ENCODE measurements at regions of chr12 and their contacts with region 1.

Region 1: DNA sequence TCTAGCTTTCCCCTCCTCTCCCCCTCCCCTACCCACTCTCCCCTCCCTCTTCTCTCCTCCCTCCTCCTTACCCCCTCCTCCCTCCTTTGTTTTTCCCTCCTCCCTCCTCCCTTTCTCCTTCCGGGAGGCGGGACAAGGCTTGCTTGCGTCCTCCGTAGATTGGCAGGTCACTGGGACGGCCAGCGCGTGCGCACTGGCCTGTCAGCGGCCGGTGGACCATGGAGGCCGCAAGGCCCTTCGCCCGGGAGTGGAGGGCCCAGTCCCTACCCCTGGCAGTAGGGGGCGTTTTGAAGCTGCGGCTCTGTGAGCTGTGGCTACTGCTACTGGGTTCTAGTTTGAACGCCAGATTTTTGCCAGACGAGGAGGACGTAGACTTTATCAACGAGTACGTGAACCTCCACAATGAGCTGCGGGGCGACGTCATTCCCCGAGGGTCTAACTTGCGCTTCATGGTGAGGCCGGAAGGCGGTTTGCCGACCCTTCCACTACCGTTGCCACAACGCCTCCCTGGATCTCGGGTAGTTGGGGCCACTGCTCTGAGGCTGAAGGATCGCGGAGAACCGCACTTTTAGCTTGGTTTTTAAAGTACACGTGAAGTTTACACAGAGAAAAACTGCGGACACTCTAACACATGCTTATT is at the start of gene GLIPR1L2:
- DNase-seq: peak; percentile 81 to 99
- ATAC-seq: peak; percentile 99 to 100
- H3K4me3 ChIP-seq: peak within 1 kb of the TSS; percentile 48
- H3K27ac ChIP-seq: peak within 1 kb of the TSS; percentile 86 to 91
- H3K4me1 ChIP-seq: peaks cover 25% of the 10 kb centered on the region; the same call in 2 of the 3 replicates
- CTCF ChIP-seq: peak; percentile 85
- EP300 ChIP-seq: no peak
- POLR2A ChIP-seq: peak; percentile 70
- RAD21 ChIP-seq: peak; percentile 76 to 83
- polyA plus RNA-seq, gene GLIPR1L2: 0.90 and 0.97 TPM in 2 replicates

Region 2: DNA sequence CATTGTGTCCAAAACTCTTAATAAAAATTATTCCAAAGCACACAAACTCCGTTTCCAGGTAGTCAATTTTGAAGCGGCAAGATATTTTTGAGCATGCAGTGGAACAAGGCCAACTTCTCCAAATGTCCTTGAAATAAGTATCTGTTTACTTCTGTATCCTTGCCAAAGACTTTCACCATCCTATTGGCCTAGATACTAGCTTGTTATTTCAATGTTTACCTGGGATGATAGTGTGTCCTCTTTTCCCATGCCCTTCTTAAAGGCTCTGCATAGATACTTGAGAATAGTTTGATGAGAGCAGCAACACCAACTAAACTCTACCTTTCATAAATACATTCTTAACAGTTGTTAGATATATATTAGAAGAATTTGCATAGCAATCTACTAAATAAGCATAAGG is 342.3 kb before region 1 on chr12:
- CTCF ChIA-PET with region 1: no interaction called
- POLR2A ChIA-PET with region 1: no interaction called
- DNase-seq: no peak
- ATAC-seq: no peak
- H3K4me3 ChIP-seq: no peak overlapping the region
- H3K27ac ChIP-seq: no peak overlapping the region
- H3K4me1 ChIP-seq: no peaks in the 10 kb centered on the region
- CTCF ChIP-seq: no peak
- EP300 ChIP-seq: no peak
- POLR2A ChIP-seq: no peak
- RAD21 ChIP-seq: no peak

Region 3: GRCh38 chr12:75270157-75270556 is 120.9 kb before region 1 on chr12:
- CTCF ChIA-PET with region 1: no interaction called
- POLR2A ChIA-PET with region 1: no interaction called
- DNase-seq: no peak
- ATAC-seq: no peak
- H3K4me3 ChIP-seq: no peak overlapping the region
- H3K27ac ChIP-seq: no peak overlapping the region
- H3K4me1 ChIP-seq: no peaks in the 10 kb centered on the region
- CTCF ChIP-seq: no peak
- EP300 ChIP-seq: no peak
- POLR2A ChIP-seq: no peak
- RAD21 ChIP-seq: no peak

Region 4: DNA sequence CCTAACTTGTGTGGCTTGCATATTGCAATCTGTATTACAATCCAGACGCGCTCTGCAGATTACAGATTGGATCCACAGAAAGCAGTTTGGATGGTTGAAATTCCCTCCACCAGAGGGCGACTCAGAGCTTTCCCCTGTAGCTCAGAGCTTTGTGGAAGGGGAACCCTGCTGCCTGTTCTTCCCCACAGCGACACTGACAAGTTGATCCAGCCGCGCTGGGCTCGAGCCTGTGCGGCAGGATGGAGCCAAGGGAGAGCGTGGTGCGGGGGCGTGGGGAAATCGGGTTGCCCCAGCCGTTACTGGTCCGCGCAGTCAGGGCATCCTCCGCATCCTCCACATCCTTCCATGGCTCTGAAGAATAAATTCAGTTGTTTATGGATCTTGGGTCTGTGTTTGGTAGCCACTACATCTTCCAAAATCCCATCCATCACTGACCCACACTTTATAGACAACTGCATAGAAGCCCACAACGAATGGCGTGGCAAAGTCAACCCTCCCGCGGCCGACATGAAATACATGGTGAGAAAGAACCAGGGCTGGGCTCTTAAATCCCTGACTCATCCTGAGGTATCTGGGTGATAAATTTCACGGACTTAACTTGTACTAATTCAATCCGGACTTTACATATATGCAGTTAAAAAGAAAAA is 56.5 kb before region 1 on chr12 and contains the start of gene GLIPR1L1:
- CTCF ChIA-PET with region 1: interaction called, 15 read pairs
- POLR2A ChIA-PET with region 1: interaction called, 5 read pairs
- DNase-seq: peak; percentile 48 to 91
- ATAC-seq: peak; percentile 89
- H3K4me3 ChIP-seq: peak within 1 kb of the TSS; percentile 50
- H3K27ac ChIP-seq: peak within 1 kb of the TSS; percentile 47 to 74; a peak in 5 of 6 replicates
- H3K4me1 ChIP-seq: peaks cover 6% of the 10 kb centered on the region; the same call in 1 of the 3 replicates
- CTCF ChIP-seq: peak; percentile 93
- EP300 ChIP-seq: no peak
- POLR2A ChIP-seq: no peak
- RAD21 ChIP-seq: peak; percentile 78 to 79
- polyA plus RNA-seq, gene GLIPR1L1: not detected in 2 replicates

Region 5: GRCh38 chr12:75404231-75404630 is 13.2 kb after region 1 on chr12:
- CTCF ChIA-PET with region 1: interaction called, 18 read pairs
- POLR2A ChIA-PET with region 1: no interaction called
- DNase-seq: no peak
- ATAC-seq: no peak
- H3K4me3 ChIP-seq: no peak overlapping the region
- H3K27ac ChIP-seq: no peak overlapping the region
- H3K4me1 ChIP-seq: no peaks in the 10 kb centered on the region
- CTCF ChIP-seq: no peak
- EP300 ChIP-seq: no peak
- POLR2A ChIP-seq: no peak
- RAD21 ChIP-seq: no peak

Region 6: DNA sequence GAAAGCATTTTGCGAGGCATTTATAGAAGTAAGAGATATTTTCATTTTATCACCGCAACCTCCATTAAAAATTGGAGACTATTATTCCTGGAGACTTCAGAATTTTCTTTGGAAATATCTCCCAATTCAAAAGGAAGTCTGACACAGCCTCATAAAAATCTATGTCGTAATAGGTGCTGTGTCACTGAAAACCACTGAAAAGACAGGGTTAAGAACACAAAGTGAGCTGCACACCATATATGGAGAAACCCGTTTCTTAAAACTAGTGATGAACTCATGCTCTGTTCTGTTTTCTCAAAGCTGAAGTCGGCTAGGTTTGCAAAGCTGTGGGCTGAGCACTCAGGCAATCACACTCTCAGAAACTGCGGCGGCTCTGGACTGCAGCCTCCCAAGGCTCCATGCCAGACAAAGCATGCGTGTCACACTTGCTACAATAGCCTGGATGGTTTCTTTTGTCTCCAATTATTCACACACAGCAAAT is 89.5 kb after region 1 on chr12 and contains the start of gene GLIPR1:
- CTCF ChIA-PET with region 1: interaction called, 46 read pairs
- POLR2A ChIA-PET with region 1: interaction called, 25 read pairs
- DNase-seq: peak; percentile 44 to 86
- ATAC-seq: peak; percentile 88
- H3K4me3 ChIP-seq: peak within 1 kb of the TSS; percentile 37
- H3K27ac ChIP-seq: peak within 1 kb of the TSS; percentile 48 to 83
- H3K4me1 ChIP-seq: peaks cover 27% of the 10 kb centered on the region; the same call in 2 of the 3 replicates
- CTCF ChIP-seq: no peak
- EP300 ChIP-seq: no peak
- POLR2A ChIP-seq: peak; percentile 37; the same call in 1 of the 2 replicates
- RAD21 ChIP-seq: 0 out of 5 replicates have a peak, but pooled peaks of 1 of the 2 experiments have one; percentile 11
- polyA plus RNA-seq, gene GLIPR1: 42.2 and 45.8 TPM in 2 replicates

Region 7: GRCh38 chr12:75489613-75490210 is 98.7 kb after region 1 on chr12:
- CTCF ChIA-PET with region 1: interaction called, 46 read pairs
- POLR2A ChIA-PET with region 1: interaction called, 9 read pairs
- DNase-seq: no peak
- ATAC-seq: peak in 1 of 2 experiments; percentile 25; a peak in 3 of 6 replicates
- H3K4me3 ChIP-seq: no peak overlapping the region
- H3K27ac ChIP-seq: peak overlapping the region in 1 of 2 experiments; percentile 22; a peak in 3 of 6 replicates
- H3K4me1 ChIP-seq: peaks cover 14% of the 10 kb centered on the region
- CTCF ChIP-seq: no peak
- EP300 ChIP-seq: no peak
- POLR2A ChIP-seq: no peak
- RAD21 ChIP-seq: no peak

Region 8: GRCh38 chr12:75505706-75506312 is 114.8 kb after region 1 on chr12:
- CTCF ChIA-PET with region 1: interaction called, 16 read pairs
- POLR2A ChIA-PET with region 1: interaction called, 8 read pairs
- DNase-seq: peak in 1 of 2 experiments; percentile 52
- ATAC-seq: peak; percentile 40 to 70; a peak in 4 of 6 replicates
- H3K4me3 ChIP-seq: no peak overlapping the region
- H3K27ac ChIP-seq: no peak overlapping the region
- H3K4me1 ChIP-seq: peaks cover 14% of the 10 kb centered on the region
- CTCF ChIP-seq: peak; percentile 80
- EP300 ChIP-seq: no peak
- POLR2A ChIP-seq: no peak
- RAD21 ChIP-seq: peak; percentile 71 to 77

Measured in A549 (cell line).